Mammary epithelial cell (primary cell): ENCODE measurements at regions of chr3 and their contacts with region 1.

Region 1: GRCh38 chr3:46882377-46883053 is 5.0 kb downstream of the PTH1R start:
- DNase-seq: no peak
- H3K4me3 ChIP-seq: peak overlapping the region; percentile 15 to 23 (median 20)
- H3K27ac ChIP-seq: no peak overlapping the region
- H3K4me1 ChIP-seq: peaks cover 12% of the 10 kb centered on the region
- H3K27me3 ChIP-seq: peaks cover 22% of the 10 kb centered on the region
- CTCF ChIP-seq: no peak

Region 2: GRCh38 chr3:46717447-46718231 is 164.9 kb before region 1 on chr3 and contains the start of gene PRSS50:
- CTCF ChIA-PET with region 1: no interaction called
- dilution Hi-C with region 1: no loop called
- in situ Hi-C with region 1: loop called in 1 of 2 experiments (anchors 10 kb)
- intact Hi-C with region 1: no loop called
- DNase-seq: no peak
- H3K4me3 ChIP-seq: no peak within 1 kb of the TSS
- H3K27ac ChIP-seq: no peak within 1 kb of the TSS
- H3K4me1 ChIP-seq: no peaks in the 10 kb centered on the region
- H3K27me3 ChIP-seq: no peaks in the 10 kb centered on the region
- CTCF ChIP-seq: peak in 1 of 2 donors; percentile 25
- total RNA-seq, gene PRSS50: under 0.01 TPM in 1 of 2 donors, not detected in the other

Region 3: DNA sequence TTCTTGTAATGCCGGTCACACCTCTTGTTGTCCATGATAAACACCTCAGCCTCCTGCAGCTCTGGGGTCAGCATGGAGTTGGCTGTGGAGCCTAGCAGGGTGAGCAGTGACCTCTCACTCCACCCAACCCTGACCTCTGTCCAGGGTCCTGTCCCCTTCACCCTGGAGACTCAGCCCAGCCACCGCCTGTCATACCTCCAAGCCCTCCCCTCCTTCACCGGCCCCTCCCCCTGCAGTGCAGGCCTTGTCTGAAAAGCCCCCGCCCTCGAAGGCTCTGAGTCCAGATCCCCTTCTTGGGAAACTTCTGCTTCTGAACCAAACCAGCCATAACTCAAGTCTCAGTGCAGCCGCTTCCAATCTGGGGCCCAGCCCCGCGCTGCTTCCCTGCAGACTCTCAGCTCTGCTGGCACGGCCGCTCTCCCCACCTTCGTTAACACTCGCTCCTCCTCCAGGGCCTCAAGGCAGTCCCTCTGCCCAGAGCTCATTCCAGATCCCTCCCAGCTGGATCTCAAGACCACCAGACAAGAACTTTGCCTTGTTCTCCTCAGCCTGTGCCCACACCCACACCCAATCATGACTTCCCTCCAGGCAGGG is 139.4 kb before region 1 on chr3:
- CTCF ChIA-PET with region 1: interaction called, 39 read pairs
- dilution Hi-C with region 1: no loop called
- in situ Hi-C with region 1: no loop called
- intact Hi-C with region 1: no loop called
- DNase-seq: no peak
- H3K4me3 ChIP-seq: no peak overlapping the region
- H3K27ac ChIP-seq: no peak overlapping the region
- H3K4me1 ChIP-seq: no peaks in the 10 kb centered on the region
- H3K27me3 ChIP-seq: peaks cover 3% of the 10 kb centered on the region
- CTCF ChIP-seq: no peak

Region 4: GRCh38 chr3:46778101-46778500 is 104.4 kb before region 1 on chr3:
- CTCF ChIA-PET with region 1: no interaction called
- dilution Hi-C with region 1: no loop called
- in situ Hi-C with region 1: no loop called
- intact Hi-C with region 1: no loop called
- DNase-seq: no peak
- H3K4me3 ChIP-seq: no peak overlapping the region
- H3K27ac ChIP-seq: no peak overlapping the region
- H3K4me1 ChIP-seq: no peaks in the 10 kb centered on the region
- H3K27me3 ChIP-seq: no peaks in the 10 kb centered on the region
- CTCF ChIP-seq: no peak

Region 5: DNA sequence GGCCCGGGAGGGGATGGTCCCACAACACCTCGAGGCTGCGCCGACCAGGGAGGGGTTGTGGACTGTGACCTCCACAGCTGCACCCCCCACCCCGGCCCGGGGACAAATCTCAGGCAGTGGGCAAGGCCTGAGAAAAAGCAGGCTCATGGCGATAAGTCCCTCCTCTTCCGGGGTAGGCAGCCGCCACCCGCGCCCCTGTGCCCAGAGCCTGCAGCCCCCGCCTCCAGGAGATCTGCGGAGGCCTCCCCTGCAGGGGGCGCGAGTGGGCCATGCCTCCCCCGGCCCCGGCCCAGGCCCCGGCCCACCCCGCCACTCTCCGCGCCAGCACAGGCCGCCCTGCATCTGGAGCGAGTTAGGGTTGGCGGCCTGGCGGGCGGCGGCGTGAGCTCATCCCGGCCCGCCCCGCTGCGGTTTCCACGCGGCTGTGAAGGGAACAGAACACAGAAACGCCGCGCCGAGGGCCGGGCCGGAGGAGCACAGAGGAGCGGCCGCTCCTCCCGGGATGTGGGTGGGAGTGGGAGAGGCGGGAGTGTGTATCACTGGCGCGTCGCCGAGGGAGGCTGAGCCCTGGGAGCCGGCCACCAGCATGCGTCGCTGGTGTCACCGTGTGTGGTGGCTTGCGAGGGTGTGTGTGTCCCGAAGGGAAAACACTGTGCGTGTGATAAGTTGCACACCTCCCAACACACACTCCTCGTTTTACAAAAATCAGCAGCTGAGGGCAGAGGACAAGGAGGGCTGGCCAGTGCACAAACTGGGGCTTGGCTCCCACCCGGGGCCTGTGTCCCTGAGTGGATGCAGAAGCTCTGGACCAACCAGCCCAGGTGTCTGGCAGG is 36.5 kb before region 1 on chr3:
- CTCF ChIA-PET with region 1: no interaction called
- dilution Hi-C with region 1: loop called (anchors 5 kb)
- in situ Hi-C with region 1: no loop called
- intact Hi-C with region 1: no loop called
- DNase-seq: peak; percentile 18
- H3K4me3 ChIP-seq: peak overlapping the region in 2 of 3 experiments; percentile 34 to 48
- H3K27ac ChIP-seq: no peak overlapping the region
- H3K4me1 ChIP-seq: peaks cover 14% of the 10 kb centered on the region
- H3K27me3 ChIP-seq: no peaks in the 10 kb centered on the region
- CTCF ChIP-seq: peak in 1 of 2 donors; percentile 46